Transverse colon (tissue), 4 donors: ENCODE measurements at regions of chr14 and their contacts with region 1.

Region 1: GRCh38 chr14:51490205-51490604 is 161.5 kb upstream of the FRMD6 start:
- DNase-seq: no peak
- H3K4me3 ChIP-seq: no peak overlapping the region
- H3K27ac ChIP-seq: peak overlapping the region in 2 of 4 donors; percentile 51 to 58
- H3K4me1 ChIP-seq: peaks cover 0 to 10% (median 0%) of the 10 kb centered on the region in 4 donors
- H3K27me3 ChIP-seq: no peaks in the 10 kb centered on the region
- CTCF ChIP-seq: no peak
- EP300 ChIP-seq: no peak
- POLR2A ChIP-seq: no peak

Region 2: GRCh38 chr14:51529736-51530135 is 39.5 kb after region 1 on chr14:
- in situ Hi-C with region 1: no loop called
- intact Hi-C with region 1: loop called (anchors 2 kb)
- DNase-seq: no peak
- H3K4me3 ChIP-seq: no peak overlapping the region
- H3K27ac ChIP-seq: no peak overlapping the region
- H3K4me1 ChIP-seq: no peaks in the 10 kb centered on the region
- H3K27me3 ChIP-seq: no peaks in the 10 kb centered on the region
- CTCF ChIP-seq: no peak
- EP300 ChIP-seq: no peak
- POLR2A ChIP-seq: no peak